ENCODE measurements at regions of chr1 and their contacts with region 1.

Region 1: GRCh38 chr1:117929173-117929989 is at the starts of genes GDAP2 and WDR3:
- DNase-seq: peak; percentile 94
- CTCF ChIP-seq: no peak

Region 2: DNA sequence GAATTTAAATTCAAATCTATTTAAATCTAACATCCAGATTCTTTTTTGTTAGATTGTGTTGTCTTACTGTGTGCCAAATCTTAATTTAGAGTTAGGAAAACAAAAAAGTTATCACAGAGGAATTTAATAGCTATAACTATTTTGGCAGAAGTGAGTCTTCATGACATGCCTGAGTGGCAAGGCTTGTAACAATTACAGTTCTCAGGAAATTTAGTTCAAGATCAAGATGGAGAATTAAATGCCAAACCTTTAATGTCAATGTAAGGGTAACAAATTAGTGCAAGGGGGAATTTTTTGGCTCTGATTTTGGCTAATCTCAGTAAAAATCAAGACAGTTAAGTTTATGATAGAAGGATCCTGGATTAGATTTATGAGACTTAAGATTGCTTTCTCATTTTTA is 58.4 kb before region 1 on chr1:
- CTCF ChIA-PET with region 1: no interaction called
- POLR2A ChIA-PET with region 1: no interaction called
- DNase-seq: no peak
- CTCF ChIP-seq: no peak

Region 3: GRCh38 chr1:117919376-117919775 is 10.0 kb before region 1 on chr1:
- CTCF ChIA-PET with region 1: interaction called, 38 read pairs
- POLR2A ChIA-PET with region 1: no interaction called
- DNase-seq: no peak
- CTCF ChIP-seq: no peak

Measured in GM10248 (cell line).